Activated naive CD4-positive, alpha-beta T cell treated with anti-CD3 and anti-CD28 coated beads for 36 hours (primary cell): ENCODE measurements at regions of chr11 and their contacts with region 1.

Region 1: GRCh38 chr11:119666463-119667131 is 62.4 kb downstream of the NECTIN1 start:
- DNase-seq: peak; percentile 72
- H3K4me3 Mint-ChIP-seq: no peak overlapping the region
- H3K27ac Mint-ChIP-seq: no peak overlapping the region
- H3K4me1 Mint-ChIP-seq: no peaks in the 10 kb centered on the region
- H3K27me3 Mint-ChIP-seq: no peaks in the 10 kb centered on the region

Region 2: GRCh38 chr11:119741369-119742262 is 75.0 kb after region 1 on chr11:
- CTCF ChIA-PET with region 1: no interaction called
- intact Hi-C with region 1: loop called (anchors 1 kb)
- DNase-seq: peak; percentile 64
- H3K4me3 Mint-ChIP-seq: peak overlapping the region; percentile 30
- H3K27ac Mint-ChIP-seq: no peak overlapping the region
- H3K4me1 Mint-ChIP-seq: peaks cover 11% of the 10 kb centered on the region
- H3K27me3 Mint-ChIP-seq: peaks cover 39% of the 10 kb centered on the region

Region 3: GRCh38 chr11:120079750-120080490 is 413.3 kb after region 1 on chr11:
- CTCF ChIA-PET with region 1: no interaction called
- intact Hi-C with region 1: loop called (anchors 1 kb)
- DNase-seq: peak; percentile 33
- H3K4me3 Mint-ChIP-seq: no peak overlapping the region
- H3K27ac Mint-ChIP-seq: no peak overlapping the region
- H3K4me1 Mint-ChIP-seq: no peaks in the 10 kb centered on the region
- H3K27me3 Mint-ChIP-seq: peaks cover 24% of the 10 kb centered on the region

Region 4: DNA sequence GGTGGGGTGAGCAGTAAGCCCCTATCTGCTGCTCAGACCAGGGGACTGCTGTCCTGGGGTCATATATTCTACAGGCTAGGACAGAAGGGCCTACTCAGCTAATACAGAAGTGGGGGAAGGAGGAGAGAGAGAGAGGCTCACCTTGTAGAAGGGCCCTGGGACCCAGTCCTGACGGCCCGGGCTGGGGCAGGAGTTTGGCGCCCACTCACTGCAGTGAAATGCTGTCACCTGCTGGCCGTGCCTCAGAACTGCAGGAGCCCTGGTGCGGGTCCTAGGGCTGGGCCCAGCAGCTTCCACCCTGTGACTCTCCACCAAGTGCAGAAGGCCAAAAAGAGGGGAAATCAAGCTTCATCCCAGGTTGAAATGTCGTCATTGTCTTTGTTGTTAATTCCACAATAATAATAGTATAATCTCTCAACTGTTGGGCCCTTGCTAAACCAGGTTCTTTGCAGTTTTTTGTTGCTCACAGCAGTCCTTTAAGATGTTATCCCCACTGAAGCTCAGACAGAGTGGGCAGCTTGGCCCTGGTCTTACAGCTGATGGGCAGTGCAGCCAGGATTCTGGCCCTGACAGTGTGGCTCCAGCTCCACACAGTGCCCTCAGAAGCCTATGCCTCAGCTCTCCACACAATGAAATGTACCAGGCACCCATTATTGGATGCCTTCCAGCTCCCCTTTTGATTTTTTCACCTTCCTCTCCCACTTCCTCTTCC is 441.7 kb after region 1 on chr11:
- CTCF ChIA-PET with region 1: interaction called, 3 read pairs
- intact Hi-C with region 1: loop called (anchors 1 kb)
- DNase-seq: peak; percentile 74
- H3K4me3 Mint-ChIP-seq: no peak overlapping the region
- H3K27ac Mint-ChIP-seq: no peak overlapping the region
- H3K4me1 Mint-ChIP-seq: no peaks in the 10 kb centered on the region
- H3K27me3 Mint-ChIP-seq: peaks cover 9% of the 10 kb centered on the region